Activated CD4-positive, alpha-beta T cell treated with anti-CD3 and anti-CD28 coated beads for 36 hours (primary cell): ENCODE measurements at regions of chr10 and their contacts with region 1.

Region 1: DNA sequence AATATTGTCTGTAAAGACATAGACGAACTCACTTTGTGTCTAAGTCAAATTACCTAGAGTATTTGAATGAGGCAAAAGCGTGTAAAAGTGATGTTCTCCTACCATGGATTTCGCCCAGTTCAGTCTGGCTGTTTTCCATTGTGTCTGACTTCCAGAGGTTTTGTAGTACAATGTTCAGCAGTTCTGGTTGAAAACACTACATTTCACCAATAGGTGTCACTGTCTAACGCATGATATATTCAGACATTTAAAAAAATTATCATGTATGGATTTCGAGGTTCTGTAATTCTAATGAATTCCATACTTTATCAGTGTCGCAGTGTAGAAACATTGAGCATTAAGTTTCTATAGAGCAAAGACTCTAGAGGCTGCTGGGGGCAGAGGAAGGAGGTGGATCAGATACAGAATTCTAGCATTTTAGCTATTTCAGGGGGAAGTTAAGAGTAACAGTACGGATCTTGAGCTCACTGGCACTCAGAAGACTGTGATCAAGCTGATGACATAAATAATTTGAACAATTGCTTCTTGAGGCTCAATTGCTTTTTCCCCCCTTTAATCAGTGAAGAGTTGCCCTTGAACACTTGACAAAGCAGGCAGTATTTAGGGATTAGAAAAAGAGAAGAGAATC is 196.9 kb upstream of the RHOBTB1 start:
- DNase-seq: no peak
- ATAC-seq: no peak
- H3K4me3 Mint-ChIP-seq: no peak overlapping the region
- H3K27ac Mint-ChIP-seq: no peak overlapping the region
- H3K4me1 Mint-ChIP-seq: no peaks in the 10 kb centered on the region
- H3K27me3 Mint-ChIP-seq: no peaks in the 10 kb centered on the region

Region 2: DNA sequence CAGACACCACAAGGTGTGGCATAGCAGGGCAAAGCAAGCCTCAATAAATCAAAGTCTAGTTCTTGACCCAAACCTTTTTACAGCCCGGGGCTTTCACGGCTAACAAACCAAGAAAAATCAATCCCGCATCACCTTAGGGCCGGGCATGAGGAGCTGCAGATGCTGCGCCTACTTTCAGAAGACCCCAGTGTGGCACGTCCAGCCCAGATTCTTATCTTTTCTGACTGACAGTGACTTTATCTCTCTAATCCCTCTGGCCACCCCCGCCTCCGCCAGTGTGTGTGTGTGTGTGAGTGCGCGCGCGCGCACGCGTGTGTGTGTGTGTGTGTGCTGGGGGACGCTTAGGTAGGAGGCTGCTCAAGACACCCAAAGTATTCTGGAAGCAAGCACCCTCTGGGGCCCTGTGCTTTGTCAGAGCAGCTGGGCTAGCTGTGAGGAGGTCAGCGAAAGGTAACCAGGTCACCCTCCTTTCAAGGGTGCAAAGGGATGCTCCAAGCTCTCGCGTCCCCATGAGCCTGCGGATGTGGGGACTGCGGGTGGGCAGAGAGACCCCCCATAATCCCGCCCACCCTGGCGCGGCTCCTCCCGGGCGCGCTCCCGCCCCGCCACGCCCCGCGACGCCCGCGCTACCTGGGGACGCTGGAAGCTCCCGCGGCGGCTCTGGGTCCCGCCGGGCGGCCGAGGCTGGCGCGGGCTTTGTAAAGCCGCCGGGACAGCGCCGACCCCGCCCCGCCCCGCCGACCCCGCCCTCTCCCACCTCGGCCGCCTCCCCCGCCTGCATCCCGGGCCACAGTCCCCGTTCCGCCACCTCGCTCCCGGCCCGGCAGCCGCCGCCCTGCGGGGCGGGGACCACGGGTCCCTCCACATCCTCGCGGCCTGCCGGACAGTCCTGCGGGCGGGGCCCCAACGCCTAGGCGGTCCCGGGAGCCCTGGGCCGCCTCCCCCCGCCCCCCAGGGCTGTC is 139.8 kb before region 1 on chr10:
- CTCF ChIA-PET with region 1: no interaction called
- POLR2A ChIA-PET with region 1: no interaction called
- intact Hi-C with region 1: no loop called
- DNase-seq: peak; percentile 38
- ATAC-seq: peak; percentile 44
- H3K4me3 Mint-ChIP-seq: no peak overlapping the region
- H3K27ac Mint-ChIP-seq: no peak overlapping the region
- H3K4me1 Mint-ChIP-seq: peaks cover 6% of the 10 kb centered on the region
- H3K27me3 Mint-ChIP-seq: peaks cover 44% of the 10 kb centered on the region

Region 3: DNA sequence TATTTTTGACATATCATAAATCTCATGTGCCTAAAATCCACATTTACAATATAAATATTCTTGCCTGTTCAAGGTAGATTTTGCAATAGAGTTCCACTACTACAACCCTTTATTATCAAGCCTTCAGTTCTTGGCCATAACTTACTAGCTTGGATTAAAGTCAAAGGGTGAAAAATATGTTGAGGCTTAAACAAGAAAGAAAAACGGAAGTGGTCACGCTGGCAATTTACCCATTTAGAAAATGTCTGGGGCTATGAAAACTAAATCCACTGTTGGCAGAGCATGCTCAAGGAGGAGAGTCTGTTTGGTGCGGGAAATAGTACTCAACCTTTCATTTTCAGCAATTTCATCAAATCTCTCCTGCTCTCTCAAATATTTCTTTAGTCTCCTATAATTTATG is 12.9 kb after region 1 on chr10:
- CTCF ChIA-PET with region 1: interaction called, 10 read pairs
- POLR2A ChIA-PET with region 1: no interaction called
- intact Hi-C with region 1: no loop called
- DNase-seq: no peak
- ATAC-seq: no peak
- H3K4me3 Mint-ChIP-seq: no peak overlapping the region
- H3K27ac Mint-ChIP-seq: no peak overlapping the region
- H3K4me1 Mint-ChIP-seq: no peaks in the 10 kb centered on the region
- H3K27me3 Mint-ChIP-seq: peaks cover 5% of the 10 kb centered on the region

Region 4: DNA sequence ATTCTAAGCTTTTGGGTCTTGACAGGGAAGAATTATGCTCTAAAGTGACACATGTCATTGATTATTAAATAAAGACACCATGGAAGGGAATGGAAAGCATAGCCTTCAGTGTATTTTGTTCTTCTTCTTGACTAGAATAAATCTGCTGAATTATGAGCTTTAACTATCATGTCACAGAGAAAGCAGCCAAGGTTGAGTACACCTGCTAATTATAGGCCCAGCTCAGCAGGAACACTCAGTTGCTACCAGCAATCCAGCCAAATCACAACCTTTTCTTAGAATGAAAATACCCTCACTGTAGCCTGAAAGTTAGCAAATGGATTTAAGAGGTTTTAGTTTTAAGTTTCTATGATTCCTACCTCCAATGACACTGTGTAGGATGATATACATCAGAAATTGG is 28.4 kb after region 1 on chr10:
- CTCF ChIA-PET with region 1: no interaction called
- POLR2A ChIA-PET with region 1: no interaction called
- intact Hi-C with region 1: no loop called
- DNase-seq: no peak
- ATAC-seq: no peak
- H3K4me3 Mint-ChIP-seq: no peak overlapping the region
- H3K27ac Mint-ChIP-seq: no peak overlapping the region
- H3K4me1 Mint-ChIP-seq: no peaks in the 10 kb centered on the region
- H3K27me3 Mint-ChIP-seq: peaks cover 2% of the 10 kb centered on the region

Region 5: DNA sequence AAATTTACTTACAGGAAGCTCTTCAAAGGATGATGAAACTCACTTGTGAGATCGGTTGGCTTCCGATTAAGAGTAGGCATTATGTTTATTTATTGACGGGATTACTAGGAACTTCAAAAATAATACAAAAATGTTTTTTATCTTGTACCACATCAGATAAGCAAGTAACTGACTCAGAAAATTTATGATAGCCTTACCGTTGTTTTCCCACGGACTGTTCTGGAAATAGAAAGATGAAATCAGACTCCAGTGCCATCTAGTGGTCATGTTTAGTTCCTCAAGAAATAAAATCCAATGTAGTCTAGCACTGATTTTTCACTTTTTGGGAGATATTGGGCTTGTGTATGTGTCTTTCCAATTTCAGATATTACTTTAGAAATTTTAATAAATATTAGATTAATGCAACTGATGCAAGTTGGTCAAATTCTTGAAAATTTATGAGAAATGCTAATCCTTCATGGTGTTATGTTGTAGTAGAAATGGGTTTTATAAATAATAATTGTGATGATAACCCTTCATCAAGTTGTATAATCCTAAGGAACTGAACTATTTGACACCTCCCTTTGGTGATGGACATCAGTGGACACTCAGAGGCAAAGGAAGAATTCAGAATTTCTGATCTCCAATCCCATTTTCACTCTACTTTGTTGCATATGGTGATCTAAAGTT is 143.5 kb after region 1 on chr10:
- CTCF ChIA-PET with region 1: interaction called, 6 read pairs
- POLR2A ChIA-PET with region 1: no interaction called
- intact Hi-C with region 1: loop called (anchors 1 to 5 kb)
- DNase-seq: no peak
- ATAC-seq: no peak
- H3K4me3 Mint-ChIP-seq: peak overlapping the region; percentile 35
- H3K27ac Mint-ChIP-seq: no peak overlapping the region
- H3K4me1 Mint-ChIP-seq: peaks cover 15% of the 10 kb centered on the region
- H3K27me3 Mint-ChIP-seq: no peaks in the 10 kb centered on the region

Region 6: GRCh38 chr10:61592581-61592980 is 451.7 kb after region 1 on chr10:
- CTCF ChIA-PET with region 1: no interaction called
- POLR2A ChIA-PET with region 1: no interaction called
- intact Hi-C with region 1: loop called in 1 of 2 experiments (anchors 5 kb)
- DNase-seq: peak; percentile 18
- ATAC-seq: no peak
- H3K4me3 Mint-ChIP-seq: no peak overlapping the region
- H3K27ac Mint-ChIP-seq: no peak overlapping the region
- H3K4me1 Mint-ChIP-seq: no peaks in the 10 kb centered on the region
- H3K27me3 Mint-ChIP-seq: peaks cover 9% of the 10 kb centered on the region

Region 7: GRCh38 chr10:61733358-61733940 is 592.6 kb after region 1 on chr10:
- CTCF ChIA-PET with region 1: interaction called, 3 read pairs
- POLR2A ChIA-PET with region 1: no interaction called
- intact Hi-C with region 1: loop called (anchors 2 to 5 kb)
- DNase-seq: peak; percentile 19
- ATAC-seq: no peak
- H3K4me3 Mint-ChIP-seq: no peak overlapping the region
- H3K27ac Mint-ChIP-seq: no peak overlapping the region
- H3K4me1 Mint-ChIP-seq: no peaks in the 10 kb centered on the region
- H3K27me3 Mint-ChIP-seq: peaks cover 15% of the 10 kb centered on the region

Region 8: GRCh38 chr10:61835069-61835945 is 694.4 kb after region 1 on chr10:
- CTCF ChIA-PET with region 1: no interaction called
- POLR2A ChIA-PET with region 1: no interaction called
- intact Hi-C with region 1: loop called in 1 of 2 experiments (anchors 10 kb)
- DNase-seq: peak; percentile 8
- ATAC-seq: peak; percentile 26
- H3K4me3 Mint-ChIP-seq: no peak overlapping the region
- H3K27ac Mint-ChIP-seq: peak overlapping the region; percentile 15
- H3K4me1 Mint-ChIP-seq: peaks cover 24% of the 10 kb centered on the region
- H3K27me3 Mint-ChIP-seq: no peaks in the 10 kb centered on the region